Dorsolateral prefrontal cortex (tissue), 120 donors: ENCODE measurements at regions of chr19 and their contacts with region 1.

Region 1: DNA sequence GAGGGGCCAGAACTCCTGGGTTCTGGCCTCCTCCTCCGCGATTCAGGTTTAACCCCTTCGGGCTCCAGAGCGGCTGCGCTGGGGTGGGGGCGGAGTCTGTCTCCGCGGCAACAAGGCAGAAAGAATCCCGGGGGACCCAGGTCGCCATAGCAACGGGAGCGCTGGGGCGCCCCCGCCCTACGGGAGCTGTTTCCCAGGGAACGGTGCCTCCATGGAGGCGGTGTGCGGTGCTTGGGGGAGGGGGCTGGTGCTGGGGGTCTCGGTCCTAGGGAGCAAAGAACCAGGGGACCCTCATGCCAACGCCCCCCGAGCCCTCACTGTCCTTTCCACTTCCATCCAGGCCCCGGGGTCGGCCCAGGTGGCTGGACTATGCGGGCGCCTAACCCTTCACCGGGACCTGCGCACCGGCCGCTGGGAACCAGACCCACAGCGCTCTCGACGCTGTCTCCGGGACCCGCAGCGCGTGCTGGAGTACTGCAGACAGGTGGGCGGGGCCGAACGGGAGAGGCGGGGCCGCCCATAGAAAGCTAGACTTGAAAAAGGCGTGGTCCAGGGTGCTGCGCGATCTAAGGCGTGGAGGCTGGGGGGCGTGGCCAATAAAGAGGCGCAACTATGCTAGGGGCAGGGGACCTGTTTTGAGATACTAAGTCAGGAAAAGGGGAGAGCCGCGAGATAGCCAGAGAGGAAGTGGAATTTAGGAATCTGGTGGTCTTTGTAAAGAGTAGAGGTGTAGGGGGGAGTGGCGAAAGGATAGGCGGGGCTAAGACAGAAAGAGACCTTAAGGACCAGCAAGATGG is 1.2 kb downstream of the APLP1 start:
- DNase-seq: peak; percentile 70 to 92 (median 88)
- H3K4me3 ChIP-seq: peak overlapping the region; percentile 56 to 92 (median 84)
- H3K27ac ChIP-seq: peak overlapping the region; percentile 90 to 100 (median 99)
- H3K27me3 ChIP-seq: no peaks in the 10 kb centered on the region
- CTCF ChIP-seq: peak in 2 of 56 donors; percentile 10 to 30

Region 2: DNA sequence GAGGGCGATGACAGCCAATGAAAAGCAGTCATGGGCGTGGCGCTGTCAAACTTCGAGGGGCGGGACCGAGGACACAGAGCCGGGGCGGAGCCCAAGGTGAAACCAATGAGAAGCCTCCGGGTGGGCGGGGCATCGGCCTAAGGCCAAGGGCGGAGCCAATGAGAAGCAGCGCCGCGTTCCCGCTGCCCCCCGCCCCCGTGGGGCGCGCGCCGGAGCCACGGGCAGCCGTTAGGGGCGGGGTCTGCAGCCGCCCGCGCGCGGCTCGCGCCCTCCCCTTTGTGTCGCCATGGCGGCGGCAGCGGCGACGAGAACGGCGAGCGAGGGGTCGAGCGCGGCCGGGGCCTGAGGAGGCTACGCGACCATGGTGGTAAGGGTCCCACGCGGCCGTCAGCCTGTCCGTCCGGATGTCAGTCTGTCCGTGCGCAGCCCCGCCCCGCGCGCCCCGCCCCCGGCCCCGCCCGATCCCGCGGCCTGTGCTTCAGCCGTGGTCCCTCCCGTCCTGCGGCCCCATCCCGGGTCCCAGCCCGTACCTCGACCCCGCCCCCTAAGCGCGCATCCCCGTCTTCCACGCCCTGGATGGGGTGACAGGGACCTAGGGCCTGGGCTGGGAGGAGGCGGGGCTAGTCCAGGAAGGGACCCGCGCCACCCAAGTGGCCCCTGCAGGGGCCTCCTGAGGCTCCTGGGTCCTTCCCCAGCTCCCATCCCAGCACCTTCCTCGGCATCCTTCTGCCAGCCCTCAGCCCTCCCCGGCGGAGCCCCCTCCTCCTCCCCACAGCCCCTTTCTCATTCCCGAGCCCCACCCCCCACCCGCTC is 94.0 kb before region 1 on chr19 and contains the start of gene ARHGAP33:
- intact Hi-C with region 1: loop called (anchors 2 to 5 kb)
- DNase-seq: peak; percentile 99 to 100 (median 100)
- H3K4me3 ChIP-seq: peak within 1 kb of the TSS; percentile 62 to 98 (median 90)
- H3K27ac ChIP-seq: peak within 1 kb of the TSS in 53 of 59 donors; percentile 20 to 90 (median 82)
- H3K27me3 ChIP-seq: no peaks in the 10 kb centered on the region
- CTCF ChIP-seq: peak in 23 of 56 donors; percentile 7 to 50 (median 17)
- total RNA-seq, gene ARHGAP33: 53.2 to 121 (median 87.3) TPM

Region 3: DNA sequence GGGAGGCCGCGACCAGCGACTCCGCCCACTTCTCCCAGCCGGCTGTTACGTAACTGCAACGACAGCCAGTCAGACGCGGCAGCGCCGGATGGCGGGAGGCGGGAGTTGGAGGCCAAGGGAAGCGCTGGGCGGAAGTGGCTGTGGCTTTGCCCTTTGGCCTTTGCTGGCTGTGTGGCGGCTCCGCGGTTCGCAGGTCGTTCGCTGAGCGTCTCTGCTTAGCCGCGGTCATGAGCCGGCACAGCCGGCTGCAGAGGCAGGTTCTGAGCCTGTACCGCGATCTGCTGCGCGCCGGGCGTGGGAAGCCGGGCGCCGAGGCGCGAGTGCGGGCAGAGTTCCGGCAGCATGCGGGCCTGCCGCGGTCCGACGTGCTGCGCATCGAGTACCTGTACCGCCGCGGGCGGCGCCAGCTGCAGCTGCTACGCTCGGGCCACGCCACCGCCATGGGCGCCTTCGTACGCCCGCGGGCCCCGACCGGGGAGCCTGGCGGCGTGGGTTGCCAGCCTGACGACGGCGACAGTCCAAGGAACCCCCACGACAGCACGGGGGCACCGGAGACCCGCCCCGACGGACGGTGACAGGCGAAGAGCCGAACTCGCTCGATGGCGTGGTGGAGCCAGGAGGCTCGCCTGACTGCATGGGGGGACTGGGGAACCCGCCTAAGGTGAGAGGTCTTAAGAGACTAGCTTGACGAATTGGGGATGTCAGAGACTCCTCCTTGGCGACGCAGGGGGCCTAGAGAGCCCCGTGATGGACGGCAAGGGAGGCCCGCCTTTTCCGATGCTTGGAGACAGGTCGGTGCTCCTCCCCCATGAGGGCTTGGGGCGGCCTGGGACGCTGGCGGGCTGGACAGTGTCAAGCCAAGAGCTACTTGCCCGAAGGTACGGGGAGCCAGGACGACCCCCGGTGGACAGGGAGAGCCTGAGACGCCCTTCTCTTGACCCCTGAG is 125.8 kb after region 1 on chr19 and contains the start of gene SDHAF1:
- intact Hi-C with region 1: loop called in 1 of 2 experiments (anchors 5 kb)
- DNase-seq: peak; percentile 95 to 99 (median 98)
- H3K4me3 ChIP-seq: peak within 1 kb of the TSS; percentile 65 to 99 (median 90)
- H3K27ac ChIP-seq: peak within 1 kb of the TSS in 55 of 59 donors; percentile 24 to 91 (median 75)
- H3K27me3 ChIP-seq: no peaks in the 10 kb centered on the region
- CTCF ChIP-seq: peak in 31 of 56 donors; percentile 17 to 56 (median 28)
- total RNA-seq, gene SDHAF1: 13.8 to 31.6 (median 21.0) TPM

Region 4: DNA sequence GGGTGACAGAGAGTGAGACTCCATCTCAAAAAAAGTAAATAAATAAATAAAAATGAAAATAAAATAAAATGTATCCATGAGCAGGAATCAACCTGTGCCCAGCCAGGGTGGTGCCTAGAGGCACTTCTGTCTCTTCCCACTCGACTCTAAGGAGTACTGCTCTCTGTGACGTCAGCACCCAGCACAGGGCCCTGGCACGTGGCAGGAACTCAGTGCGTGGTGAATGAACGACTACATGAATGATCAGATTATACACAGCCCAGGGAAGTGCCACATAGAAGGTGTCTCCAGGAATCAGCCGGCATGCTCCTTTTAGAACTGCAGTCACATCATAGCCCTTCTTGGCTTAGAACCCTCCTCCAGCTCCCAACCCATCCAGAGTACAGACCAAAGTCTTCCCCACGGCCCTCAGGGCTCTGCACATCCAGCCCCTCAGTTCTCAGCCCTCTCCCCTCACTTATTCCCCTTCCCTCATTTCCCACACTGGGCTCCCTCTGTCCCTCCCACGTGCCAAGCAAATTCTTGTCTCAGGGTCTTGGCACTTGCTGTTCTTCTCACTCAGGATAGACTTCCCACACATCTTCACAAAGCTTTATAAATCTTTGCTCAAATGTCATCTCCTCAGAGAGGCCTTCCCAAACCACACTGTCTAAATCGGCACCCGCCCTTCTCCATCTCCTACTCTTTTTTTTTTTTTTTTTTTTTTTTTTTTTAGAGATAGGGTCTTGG is 159.0 kb after region 1 on chr19:
- intact Hi-C with region 1: loop called in 1 of 2 experiments (anchors 10 kb)
- DNase-seq: peak in 9 of 10 donors; percentile 42 to 89 (median 69)
- H3K4me3 ChIP-seq: peak overlapping the region in 1 of 59 donors; percentile 2
- H3K27ac ChIP-seq: peak overlapping the region in 3 of 59 donors; percentile 5 to 28 (median 13)
- H3K27me3 ChIP-seq: no peaks in the 10 kb centered on the region
- CTCF ChIP-seq: no peak

Region 5: GRCh38 chr19:36093146-36093662 is 223.7 kb after region 1 on chr19:
- intact Hi-C with region 1: no loop called
- DNase-seq: no peak
- H3K4me3 ChIP-seq: no peak overlapping the region
- H3K27ac ChIP-seq: peak overlapping the region; percentile 36 to 98 (median 87)
- H3K27me3 ChIP-seq: no peaks in the 10 kb centered on the region
- CTCF ChIP-seq: no peak